Activated CD4-positive, alpha-beta T cell treated with anti-CD3 and anti-CD28 coated beads, Interleukin-2, amount 10 ng/mL, durations not matched to agents 7 days and 5 days (primary cell): ENCODE measurements at regions of chr17 and their contacts with region 1.

Region 1: GRCh38 chr17:43446773-43447172 is 37.0 kb upstream of the DHX8 start:
- DNase-seq: no peak
- H3K4me3 Mint-ChIP-seq: no peak overlapping the region
- H3K27ac Mint-ChIP-seq: no peak overlapping the region
- H3K4me1 Mint-ChIP-seq: no peaks in the 10 kb centered on the region
- H3K27me3 Mint-ChIP-seq: peaks cover 15% of the 10 kb centered on the region

Region 2: GRCh38 chr17:43155666-43156065 is 291.1 kb before region 1 on chr17:
- CTCF ChIA-PET with region 1: no interaction called
- POLR2A ChIA-PET with region 1: no interaction called
- DNase-seq: no peak
- H3K4me3 Mint-ChIP-seq: no peak overlapping the region
- H3K27ac Mint-ChIP-seq: no peak overlapping the region
- H3K4me1 Mint-ChIP-seq: no peaks in the 10 kb centered on the region
- H3K27me3 Mint-ChIP-seq: no peaks in the 10 kb centered on the region

Region 3: DNA sequence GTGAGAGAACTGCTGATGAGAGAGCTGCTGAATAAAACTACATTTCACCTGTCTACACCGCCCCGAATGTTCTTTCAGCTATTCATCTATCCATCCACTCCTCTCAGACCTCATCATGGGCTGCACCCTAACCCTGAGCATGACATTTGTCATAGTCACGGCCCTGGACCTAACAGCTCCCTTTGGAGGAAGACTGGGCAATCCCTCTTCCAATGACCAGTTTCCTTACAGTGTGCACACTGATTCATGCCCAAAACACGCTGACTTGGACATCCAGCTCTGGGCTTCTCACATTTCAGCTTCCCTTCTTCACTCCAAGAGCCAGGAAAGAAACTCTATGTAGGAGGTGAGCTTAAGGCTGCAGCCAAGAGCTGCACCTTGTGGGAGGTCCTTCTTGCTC is 89.8 kb before region 1 on chr17:
- CTCF ChIA-PET with region 1: no interaction called
- POLR2A ChIA-PET with region 1: no interaction called
- DNase-seq: no peak
- H3K4me3 Mint-ChIP-seq: no peak overlapping the region
- H3K27ac Mint-ChIP-seq: no peak overlapping the region
- H3K4me1 Mint-ChIP-seq: peaks cover 17% of the 10 kb centered on the region
- H3K27me3 Mint-ChIP-seq: no peaks in the 10 kb centered on the region

Region 4: DNA sequence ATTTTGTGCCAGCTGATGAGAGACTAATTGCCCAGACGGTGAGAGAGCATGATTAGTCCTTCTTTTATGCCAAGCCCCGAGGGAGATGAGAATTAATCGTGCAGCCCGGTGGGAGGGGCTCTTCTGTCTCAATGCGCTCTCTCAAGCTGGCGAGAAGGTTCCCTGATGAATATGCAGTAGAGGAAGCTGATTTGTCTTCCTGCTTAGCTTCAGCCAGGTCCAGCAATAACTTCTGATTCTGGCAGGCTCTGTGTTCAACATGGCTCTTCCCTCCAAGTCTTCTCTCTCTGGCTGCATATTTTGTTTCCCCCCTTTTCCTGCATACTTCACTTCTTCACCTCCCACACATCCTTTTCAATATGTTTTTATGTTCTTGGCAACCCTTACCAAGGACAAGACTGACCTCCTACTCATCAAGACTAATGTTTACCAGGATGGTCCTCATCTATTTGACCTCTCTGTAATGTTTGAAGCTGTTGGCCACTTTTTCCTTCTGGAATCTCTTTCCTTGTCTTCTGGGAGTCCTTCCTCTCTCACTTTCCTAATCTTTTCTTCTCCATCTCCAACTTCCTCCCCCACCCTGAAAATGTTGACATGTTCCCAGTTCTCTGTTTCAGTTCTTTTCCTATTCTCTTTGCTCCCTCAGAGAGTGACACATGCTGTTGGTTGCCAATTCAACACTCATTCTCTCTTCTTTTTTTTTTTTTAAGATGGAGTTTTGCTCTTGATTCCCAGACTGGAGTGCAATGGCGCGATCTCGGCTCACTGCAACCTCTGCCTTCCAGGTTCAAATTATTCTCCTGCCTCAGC is 14.9 kb before region 1 on chr17:
- CTCF ChIA-PET with region 1: no interaction called
- POLR2A ChIA-PET with region 1: no interaction called
- DNase-seq: no peak
- H3K4me3 Mint-ChIP-seq: no peak overlapping the region
- H3K27ac Mint-ChIP-seq: no peak overlapping the region
- H3K4me1 Mint-ChIP-seq: no peaks in the 10 kb centered on the region
- H3K27me3 Mint-ChIP-seq: peaks cover 33% of the 10 kb centered on the region

Region 5: DNA sequence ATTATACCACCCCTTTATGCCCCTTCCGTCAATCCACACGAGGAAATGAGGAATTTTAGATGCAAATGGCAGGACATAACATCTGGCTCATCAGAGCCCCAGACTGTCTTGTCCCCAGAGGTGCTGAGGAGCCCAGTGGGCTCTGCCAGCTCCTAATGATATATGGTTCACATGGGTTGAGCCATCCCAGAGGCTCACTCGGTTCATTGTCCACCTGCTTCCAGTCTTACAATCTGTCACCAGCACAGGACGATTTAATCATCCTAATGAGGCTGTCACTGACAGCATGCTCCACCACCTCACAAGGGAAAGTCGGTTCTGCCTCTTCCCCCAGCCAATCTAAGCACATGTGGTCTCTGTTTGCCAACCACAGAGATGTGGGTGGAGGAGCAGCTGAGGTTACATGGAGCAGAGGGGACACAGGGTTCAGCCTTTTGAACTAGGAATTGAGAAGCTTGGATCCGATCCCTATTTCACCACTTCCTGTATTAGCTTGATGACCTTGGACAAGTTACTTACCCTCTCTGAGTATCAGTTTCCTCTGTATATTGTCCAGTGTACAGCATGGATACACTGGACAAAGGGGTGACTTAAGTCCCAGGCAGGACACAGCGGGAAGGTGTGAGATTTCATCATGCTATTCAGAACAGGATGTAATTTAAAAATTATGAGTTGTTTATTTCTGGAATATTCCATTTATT is 10.0 kb after region 1 on chr17:
- CTCF ChIA-PET with region 1: interaction called, 3 read pairs
- POLR2A ChIA-PET with region 1: interaction called, 14 read pairs
- DNase-seq: no peak
- H3K4me3 Mint-ChIP-seq: no peak overlapping the region
- H3K27ac Mint-ChIP-seq: no peak overlapping the region
- H3K4me1 Mint-ChIP-seq: peaks cover 1% of the 10 kb centered on the region
- H3K27me3 Mint-ChIP-seq: peaks cover 4% of the 10 kb centered on the region

Region 6: GRCh38 chr17:43517615-43518386 is 71.0 kb after region 1 on chr17:
- CTCF ChIA-PET with region 1: no interaction called
- POLR2A ChIA-PET with region 1: no interaction called
- DNase-seq: no peak
- H3K4me3 Mint-ChIP-seq: no peak overlapping the region
- H3K27ac Mint-ChIP-seq: no peak overlapping the region
- H3K4me1 Mint-ChIP-seq: peaks cover 7% of the 10 kb centered on the region
- H3K27me3 Mint-ChIP-seq: no peaks in the 10 kb centered on the region